Caco-2 (cell line): ENCODE measurements at regions of chr12 and their contacts with region 1.

Region 1: DNA sequence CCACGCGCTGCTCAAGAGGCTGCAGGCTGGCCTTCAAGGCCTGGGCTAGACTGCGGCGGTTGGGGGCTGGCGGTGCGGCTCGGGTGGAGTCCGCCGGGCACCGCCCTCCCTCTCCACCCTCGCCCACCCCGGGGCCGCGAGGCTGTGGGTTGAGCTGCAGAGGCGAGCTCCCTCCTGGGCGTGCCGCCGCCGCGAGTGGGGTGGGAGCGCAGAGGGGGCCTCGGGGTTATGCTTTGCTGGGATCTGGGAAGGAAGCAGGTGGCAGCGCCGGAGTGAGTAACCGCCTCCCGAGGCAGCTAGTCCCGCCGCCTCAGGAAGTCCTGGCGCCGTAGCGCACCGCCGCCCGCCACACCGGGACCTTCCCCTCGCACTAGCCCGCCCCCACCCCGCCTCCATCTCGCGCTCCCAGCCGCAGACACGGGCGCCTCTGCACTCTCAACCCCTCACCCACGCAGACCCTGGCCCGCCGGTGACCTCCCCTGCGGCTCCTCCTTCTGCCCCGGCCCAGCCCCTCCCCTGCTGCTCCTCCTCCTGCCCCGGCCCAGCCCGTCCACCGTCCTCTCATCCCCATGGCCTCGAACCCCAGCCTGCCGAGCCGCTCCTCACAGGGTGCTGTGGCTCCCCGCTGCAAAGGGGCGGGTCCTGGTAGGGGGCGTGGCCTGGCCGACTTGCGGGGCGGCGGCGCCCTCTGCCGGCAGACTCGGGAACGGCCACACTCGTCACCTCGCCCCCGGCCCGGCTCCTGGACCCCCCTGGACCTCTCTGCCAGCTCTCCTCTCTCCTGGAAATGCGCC is 16.6 kb downstream of the TAMALIN start:
- DNase-seq: peak; percentile 89 to 95
- H3K4me3 ChIP-seq: peak overlapping the region; percentile 75
- H3K4me3 Mint-ChIP-seq: peak overlapping the region; percentile 90
- H3K27ac Mint-ChIP-seq: no peak overlapping the region
- H3K4me1 ChIP-seq: peaks cover 12% of the 10 kb centered on the region; the same call in 1 of the 2 replicates
- H3K4me1 Mint-ChIP-seq: peaks cover 33% of the 10 kb centered on the region
- H3K27me3 ChIP-seq: no peaks in the 10 kb centered on the region
- H3K27me3 Mint-ChIP-seq: no peaks in the 10 kb centered on the region
- CTCF ChIP-seq: peak; percentile 96

Region 2: GRCh38 chr12:51863933-51864832 is 159.2 kb before region 1 on chr12:
- CTCF ChIA-PET with region 1: interaction called, 10 read pairs
- POLR2A ChIA-PET with region 1: no interaction called
- intact Hi-C with region 1: no loop called
- DNase-seq: peak; percentile 88 to 91
- H3K4me3 ChIP-seq: peak overlapping the region; percentile 50
- H3K4me3 Mint-ChIP-seq: peak overlapping the region; percentile 68
- H3K27ac Mint-ChIP-seq: peak overlapping the region; percentile 75
- H3K4me1 ChIP-seq: peaks cover 36% of the 10 kb centered on the region
- H3K4me1 Mint-ChIP-seq: peaks cover 22% of the 10 kb centered on the region
- H3K27me3 ChIP-seq: no peaks in the 10 kb centered on the region
- H3K27me3 Mint-ChIP-seq: no peaks in the 10 kb centered on the region
- CTCF ChIP-seq: no peak

Region 3: GRCh38 chr12:51959211-51959610 is 64.2 kb before region 1 on chr12:
- CTCF ChIA-PET with region 1: interaction called, 11 read pairs
- POLR2A ChIA-PET with region 1: no interaction called
- intact Hi-C with region 1: no loop called
- DNase-seq: peak; percentile 54 to 60
- H3K4me3 ChIP-seq: no peak overlapping the region
- H3K4me3 Mint-ChIP-seq: peak overlapping the region; percentile 42
- H3K27ac Mint-ChIP-seq: peak overlapping the region; percentile 77
- H3K4me1 ChIP-seq: peaks cover 84% of the 10 kb centered on the region
- H3K4me1 Mint-ChIP-seq: peaks cover 58% of the 10 kb centered on the region
- H3K27me3 ChIP-seq: no peaks in the 10 kb centered on the region
- H3K27me3 Mint-ChIP-seq: no peaks in the 10 kb centered on the region
- CTCF ChIP-seq: no peak

Region 4: DNA sequence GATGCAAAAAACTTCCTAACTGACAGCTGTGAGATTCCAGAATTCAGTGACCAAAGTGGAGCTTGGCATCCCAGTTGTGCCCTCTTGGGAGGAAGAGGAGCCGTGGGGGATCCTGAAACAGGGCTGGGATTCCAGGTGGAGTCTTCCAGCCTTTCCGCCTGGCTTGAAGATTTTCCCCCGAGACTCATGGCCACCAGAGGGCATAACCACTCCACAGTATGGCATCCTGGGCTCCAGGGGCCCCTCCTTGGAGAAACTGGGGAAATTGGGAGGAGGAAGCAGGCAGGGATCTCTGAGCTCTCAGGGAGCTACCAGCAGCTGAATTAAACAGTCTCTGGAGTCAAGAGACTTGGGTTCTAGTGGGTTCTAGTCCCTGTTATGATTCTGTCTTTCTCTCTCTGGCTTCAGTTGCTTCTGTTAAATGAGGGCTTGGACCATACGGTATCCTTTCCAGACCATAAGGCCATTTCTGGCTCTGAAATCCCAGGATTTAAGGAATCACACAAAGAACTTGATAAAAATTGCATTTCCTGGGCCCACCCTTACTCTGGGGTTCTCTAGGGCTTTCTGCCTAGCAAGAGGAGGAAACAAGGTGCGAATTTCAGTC is 19.2 kb before region 1 on chr12:
- CTCF ChIA-PET with region 1: interaction called, 69 read pairs
- POLR2A ChIA-PET with region 1: interaction called, 3 read pairs
- intact Hi-C with region 1: loop called (anchors 1 kb)
- DNase-seq: peak; percentile 70 to 78
- H3K4me3 ChIP-seq: no peak overlapping the region
- H3K4me3 Mint-ChIP-seq: no peak overlapping the region
- H3K27ac Mint-ChIP-seq: no peak overlapping the region
- H3K4me1 ChIP-seq: no peaks in the 10 kb centered on the region
- H3K4me1 Mint-ChIP-seq: no peaks in the 10 kb centered on the region
- H3K27me3 ChIP-seq: no peaks in the 10 kb centered on the region
- H3K27me3 Mint-ChIP-seq: no peaks in the 10 kb centered on the region
- CTCF ChIP-seq: peak; percentile 86 to 87

Region 5: GRCh38 chr12:52050761-52051541 is 27.6 kb after region 1 on chr12 and contains the start of gene NR4A1:
- CTCF ChIA-PET with region 1: interaction called, 56 read pairs
- POLR2A ChIA-PET with region 1: interaction called, 26 read pairs
- intact Hi-C with region 1: loop called (anchors 1 kb)
- DNase-seq: peak; percentile 97 to 99
- H3K4me3 ChIP-seq: peak within 1 kb of the TSS; percentile 60
- H3K4me3 Mint-ChIP-seq: peak within 1 kb of the TSS; percentile 84
- H3K27ac Mint-ChIP-seq: peak within 1 kb of the TSS; percentile 68
- H3K4me1 ChIP-seq: peaks cover 23% of the 10 kb centered on the region
- H3K4me1 Mint-ChIP-seq: peaks cover 22% of the 10 kb centered on the region
- H3K27me3 ChIP-seq: no peaks in the 10 kb centered on the region
- H3K27me3 Mint-ChIP-seq: no peaks in the 10 kb centered on the region
- CTCF ChIP-seq: peak in 1 of 2 experiments; percentile 46
- total RNA-seq, gene NR4A1: 37.9 and 41.8 TPM in 2 replicates

Region 6: GRCh38 chr12:52069327-52070184 is 46.2 kb after region 1 on chr12 and contains the start of gene ATG101:
- CTCF ChIA-PET with region 1: interaction called, 84 read pairs
- POLR2A ChIA-PET with region 1: interaction called, 8 read pairs
- intact Hi-C with region 1: loop called (anchors 1 kb)
- DNase-seq: peak; percentile 96
- H3K4me3 ChIP-seq: peak within 1 kb of the TSS; percentile 80
- H3K4me3 Mint-ChIP-seq: peak within 1 kb of the TSS; percentile 85
- H3K27ac Mint-ChIP-seq: peak within 1 kb of the TSS; percentile 100
- H3K4me1 ChIP-seq: peaks cover 12% of the 10 kb centered on the region
- H3K4me1 Mint-ChIP-seq: peaks cover 30% of the 10 kb centered on the region
- H3K27me3 ChIP-seq: no peaks in the 10 kb centered on the region
- H3K27me3 Mint-ChIP-seq: no peaks in the 10 kb centered on the region
- CTCF ChIP-seq: peak; percentile 47 to 97
- total RNA-seq, gene ATG101: 67.2 and 78.0 TPM in 2 replicates

Region 7: GRCh38 chr12:52121824-52122539 is 98.6 kb after region 1 on chr12:
- CTCF ChIA-PET with region 1: interaction called, 63 read pairs
- POLR2A ChIA-PET with region 1: no interaction called
- intact Hi-C with region 1: loop called (anchors 1 kb)
- DNase-seq: peak; percentile 74 to 83
- H3K4me3 ChIP-seq: no peak overlapping the region
- H3K4me3 Mint-ChIP-seq: no peak overlapping the region
- H3K27ac Mint-ChIP-seq: no peak overlapping the region
- H3K4me1 ChIP-seq: peaks cover 21% of the 10 kb centered on the region
- H3K4me1 Mint-ChIP-seq: peaks cover 20% of the 10 kb centered on the region
- H3K27me3 ChIP-seq: no peaks in the 10 kb centered on the region
- H3K27me3 Mint-ChIP-seq: no peaks in the 10 kb centered on the region
- CTCF ChIP-seq: peak; percentile 96

Region 8: GRCh38 chr12:52495389-52495788 is 472.0 kb after region 1 on chr12:
- CTCF ChIA-PET with region 1: no interaction called
- POLR2A ChIA-PET with region 1: no interaction called
- intact Hi-C with region 1: no loop called
- DNase-seq: peak in 1 of 2 experiments; percentile 17
- H3K4me3 ChIP-seq: no peak overlapping the region
- H3K4me3 Mint-ChIP-seq: no peak overlapping the region
- H3K27ac Mint-ChIP-seq: no peak overlapping the region
- H3K4me1 ChIP-seq: peaks cover 18% of the 10 kb centered on the region
- H3K4me1 Mint-ChIP-seq: peaks cover 7% of the 10 kb centered on the region
- H3K27me3 ChIP-seq: no peaks in the 10 kb centered on the region
- H3K27me3 Mint-ChIP-seq: peaks cover 14% of the 10 kb centered on the region
- CTCF ChIP-seq: no peak